A673 (cell line): ENCODE measurements at regions of chr9 and their contacts with region 1.

Region 1: DNA sequence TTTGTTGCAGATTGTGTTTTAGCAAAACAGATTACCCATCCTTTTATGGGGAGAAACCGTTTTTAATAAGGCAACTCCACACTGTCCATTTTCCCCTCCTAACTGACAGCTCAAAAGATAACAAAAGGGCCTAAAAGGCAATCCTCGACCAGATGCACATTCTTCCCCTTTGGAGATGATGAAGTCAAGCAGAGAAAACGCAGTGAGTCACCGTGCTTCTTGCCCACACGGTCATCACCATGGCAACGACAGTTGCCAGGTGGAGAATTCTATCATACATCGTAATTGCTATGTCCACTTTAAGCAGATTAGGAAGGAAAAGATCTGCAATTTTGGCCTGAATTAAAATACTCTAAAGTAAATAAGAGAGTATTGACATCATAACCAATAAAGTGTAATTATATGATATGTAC is 96.4 kb downstream of the DIRAS2 start:
- DNase-seq: peak; percentile 35
- H3K4me3 ChIP-seq: no peak overlapping the region
- H3K27ac ChIP-seq: no peak overlapping the region
- H3K4me1 ChIP-seq: no peaks in the 10 kb centered on the region
- H3K27me3 ChIP-seq: no peaks in the 10 kb centered on the region
- CTCF ChIP-seq: no peak

Region 2: DNA sequence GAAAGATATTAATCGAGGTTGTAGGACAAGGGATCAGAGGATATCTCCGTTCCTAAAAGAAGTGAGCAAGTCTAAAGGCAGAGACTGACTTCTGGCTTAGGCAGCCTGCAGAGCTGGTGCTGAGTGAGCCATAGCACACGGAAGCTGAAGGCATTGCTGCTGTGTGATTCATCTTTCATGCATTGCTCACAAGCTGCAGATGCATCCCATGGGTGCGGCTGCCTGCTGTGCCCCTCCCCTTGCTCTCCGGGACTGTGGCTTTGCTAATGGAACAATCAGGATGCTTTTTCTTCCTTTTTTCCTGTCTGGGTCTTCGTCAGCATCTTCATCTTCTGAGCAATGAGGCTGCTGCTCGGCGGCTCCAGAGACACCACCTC is 245.0 kb before region 1 on chr9:
- CTCF ChIA-PET with region 1: interaction called, 13 read pairs
- POLR2A ChIA-PET with region 1: no interaction called
- intact Hi-C with region 1: no loop called
- DNase-seq: peak; percentile 84
- H3K4me3 ChIP-seq: no peak overlapping the region
- H3K27ac ChIP-seq: no peak overlapping the region
- H3K4me1 ChIP-seq: peaks cover 6% of the 10 kb centered on the region
- H3K27me3 ChIP-seq: no peaks in the 10 kb centered on the region
- CTCF ChIP-seq: no peak